MCF 10A (cell line): ENCODE measurements at regions of chr15 and their contacts with region 1.

Region 1: DNA sequence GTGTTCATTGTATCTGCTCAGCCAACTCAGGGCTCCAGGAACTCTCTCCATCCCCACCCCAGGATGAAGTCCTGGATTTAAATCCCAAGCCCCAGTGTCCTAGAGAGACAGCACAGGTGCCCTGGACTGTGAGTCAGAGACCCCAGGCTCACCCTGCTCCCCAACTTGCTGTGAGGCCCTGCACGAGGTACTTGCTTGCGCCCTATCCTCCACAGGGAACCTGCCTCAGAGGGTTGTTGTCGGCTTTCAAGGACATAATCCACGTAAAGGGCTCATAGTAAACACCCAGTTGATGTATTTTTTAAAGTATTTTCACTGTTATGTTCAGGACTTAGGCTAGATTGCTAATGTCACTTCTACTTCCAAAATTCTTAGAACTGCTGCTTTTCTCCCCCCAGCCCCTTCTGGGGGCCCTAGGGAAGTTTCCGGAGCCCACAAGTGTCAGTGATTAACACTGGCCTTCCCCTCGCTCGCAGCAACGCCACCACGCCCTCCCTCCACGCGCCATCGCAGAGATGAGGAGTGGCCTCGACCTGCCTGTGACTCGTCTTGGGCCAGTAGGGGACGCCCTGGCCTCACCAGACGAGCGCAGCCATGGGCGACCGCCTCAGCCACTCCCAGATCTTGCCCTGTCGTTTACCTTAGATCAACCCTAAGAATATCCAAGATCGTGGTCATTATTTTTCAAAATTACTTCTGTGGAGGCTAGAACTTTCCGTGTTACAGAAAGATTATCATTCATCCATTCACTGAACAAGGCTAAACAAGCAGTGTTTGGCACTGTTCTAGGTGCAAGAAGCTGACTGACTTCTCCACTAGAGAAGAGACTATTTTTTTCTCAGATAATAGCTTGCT is 6.0 kb upstream of the SRP14 start:
- DNase-seq: peak; percentile 83
- H3K4me3 Mint-ChIP-seq: peak overlapping the region; percentile 41
- H3K27ac Mint-ChIP-seq: no peak overlapping the region
- H3K4me1 Mint-ChIP-seq: peaks cover 26% of the 10 kb centered on the region
- H3K27me3 Mint-ChIP-seq: no peaks in the 10 kb centered on the region
- CTCF ChIP-seq: peak; percentile 95

Region 2: GRCh38 chr15:39946862-39947261 is 98.1 kb before region 1 on chr15:
- CTCF ChIA-PET with region 1: no interaction called
- POLR2A ChIA-PET with region 1: no interaction called
- intact Hi-C with region 1: no loop called
- DNase-seq: peak; percentile 16
- H3K4me3 Mint-ChIP-seq: no peak overlapping the region
- H3K27ac Mint-ChIP-seq: no peak overlapping the region
- H3K4me1 Mint-ChIP-seq: no peaks in the 10 kb centered on the region
- H3K27me3 Mint-ChIP-seq: no peaks in the 10 kb centered on the region
- CTCF ChIP-seq: no peak

Region 3: GRCh38 chr15:40063563-40064011 is 18.6 kb after region 1 on chr15:
- CTCF ChIA-PET with region 1: interaction called, 15 read pairs
- POLR2A ChIA-PET with region 1: interaction called, 3 read pairs
- intact Hi-C with region 1: no loop called
- DNase-seq: peak; percentile 91
- H3K4me3 Mint-ChIP-seq: no peak overlapping the region
- H3K27ac Mint-ChIP-seq: no peak overlapping the region
- H3K4me1 Mint-ChIP-seq: peaks cover 3% of the 10 kb centered on the region
- H3K27me3 Mint-ChIP-seq: no peaks in the 10 kb centered on the region
- CTCF ChIP-seq: no peak

Region 4: DNA sequence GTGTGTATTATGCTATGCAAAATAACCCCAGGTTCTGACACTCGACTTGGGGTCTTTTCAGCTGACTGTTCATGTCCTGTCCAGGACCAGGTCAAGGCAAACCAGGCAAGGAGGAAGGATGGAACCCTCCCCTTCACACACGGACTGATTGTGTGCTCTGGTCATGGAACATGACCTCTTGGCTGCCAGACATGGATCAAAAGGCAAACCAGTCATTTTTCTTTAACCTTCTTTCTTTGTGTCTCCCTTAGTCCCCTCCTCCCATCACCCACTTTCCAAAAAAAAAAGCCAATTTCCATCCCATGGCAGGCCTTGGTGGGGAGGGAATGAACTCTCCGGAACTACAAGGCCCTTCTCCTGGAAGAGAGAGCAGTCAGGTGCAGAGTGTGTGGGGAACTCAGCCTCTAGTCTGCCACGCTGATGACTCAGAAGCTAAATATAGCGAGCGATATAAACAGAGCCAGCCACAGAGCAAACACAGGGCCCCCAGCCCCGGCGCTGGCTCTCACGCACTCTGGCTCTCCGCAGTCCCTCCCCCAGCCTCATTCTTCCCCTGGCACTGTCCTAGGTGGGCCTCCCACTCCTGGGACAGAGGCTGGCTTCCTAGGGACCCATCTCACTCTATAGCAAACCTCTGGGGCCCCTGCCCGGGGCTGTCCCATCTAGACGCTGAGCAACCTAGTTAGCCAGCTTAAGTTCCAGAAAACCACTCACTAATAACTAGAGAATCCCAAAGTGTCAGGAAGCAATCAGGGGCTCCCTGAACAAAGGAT is 53.7 kb after region 1 on chr15:
- CTCF ChIA-PET with region 1: interaction called, 125 read pairs
- POLR2A ChIA-PET with region 1: interaction called, 8 read pairs
- intact Hi-C with region 1: loop called (anchors 1 kb)
- DNase-seq: peak; percentile 86
- H3K4me3 Mint-ChIP-seq: no peak overlapping the region
- H3K27ac Mint-ChIP-seq: peak overlapping the region; percentile 73
- H3K4me1 Mint-ChIP-seq: peaks cover 24% of the 10 kb centered on the region
- H3K27me3 Mint-ChIP-seq: no peaks in the 10 kb centered on the region
- CTCF ChIP-seq: no peak

Region 5: DNA sequence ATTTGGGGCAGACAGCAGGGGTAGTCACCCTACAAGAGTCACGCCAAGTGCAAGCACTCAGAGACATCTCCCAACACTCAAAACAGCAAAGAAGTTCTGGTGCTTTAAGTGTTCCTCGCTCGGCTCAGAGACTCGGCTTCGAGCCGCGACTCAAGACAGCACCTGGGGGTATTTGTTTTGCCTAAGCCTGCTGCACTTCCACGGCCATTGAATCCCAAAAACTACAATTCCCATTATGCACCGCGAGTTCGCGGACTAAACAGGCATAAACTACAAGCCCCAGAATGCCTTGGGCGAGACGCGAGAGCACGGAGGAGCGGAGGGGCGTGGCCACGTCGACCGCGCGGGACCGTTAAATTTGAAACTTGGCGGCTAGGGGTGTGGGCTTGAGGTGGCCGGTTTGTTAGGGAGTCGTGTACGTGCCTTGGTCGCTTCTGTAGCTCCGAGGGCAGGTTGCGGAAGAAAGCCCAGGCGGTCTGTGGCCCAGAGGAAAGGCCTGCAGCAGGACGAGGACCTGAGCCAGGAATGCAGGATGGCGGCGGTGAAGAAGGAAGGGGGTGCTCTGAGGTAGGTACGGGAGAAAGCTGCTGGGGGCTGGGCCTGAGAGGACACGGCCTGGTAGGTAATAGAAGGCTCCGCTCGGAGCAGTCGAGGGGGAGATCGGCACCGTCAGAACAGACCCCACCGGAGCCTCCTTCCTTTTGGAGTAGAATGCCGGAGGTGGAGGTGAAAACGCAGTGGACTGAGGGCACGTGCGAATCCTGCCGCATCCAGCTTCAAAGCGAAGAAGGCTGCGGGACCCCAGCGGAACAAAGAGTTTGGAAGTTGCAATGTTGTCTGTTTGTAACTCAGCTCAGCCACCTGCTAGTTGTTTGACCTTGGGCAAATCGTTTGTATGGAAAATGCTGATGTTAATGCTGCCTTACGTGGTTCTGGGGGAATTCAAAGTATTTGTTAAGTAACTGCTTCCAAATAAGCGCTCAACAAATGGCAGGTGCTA is 116.0 kb after region 1 on chr15 and contains the start of gene BUB1B:
- CTCF ChIA-PET with region 1: interaction called, 11 read pairs
- POLR2A ChIA-PET with region 1: interaction called, 3 read pairs
- intact Hi-C with region 1: loop called (anchors 1 kb)
- DNase-seq: peak; percentile 96
- H3K4me3 Mint-ChIP-seq: no peak within 1 kb of the TSS
- H3K27ac Mint-ChIP-seq: no peak within 1 kb of the TSS
- H3K4me1 Mint-ChIP-seq: no peaks in the 10 kb centered on the region
- H3K27me3 Mint-ChIP-seq: no peaks in the 10 kb centered on the region
- CTCF ChIP-seq: no peak
- total RNA-seq, gene BUB1B: 24.4 and 30.9 TPM in 2 replicates

Region 6: GRCh38 chr15:40190591-40190990 is 145.6 kb after region 1 on chr15:
- CTCF ChIA-PET with region 1: no interaction called
- POLR2A ChIA-PET with region 1: interaction called, 5 read pairs
- intact Hi-C with region 1: loop called (anchors 5 kb)
- DNase-seq: peak; percentile 48
- H3K4me3 Mint-ChIP-seq: no peak overlapping the region
- H3K27ac Mint-ChIP-seq: no peak overlapping the region
- H3K4me1 Mint-ChIP-seq: peaks cover 6% of the 10 kb centered on the region
- H3K27me3 Mint-ChIP-seq: no peaks in the 10 kb centered on the region
- CTCF ChIP-seq: no peak

Region 7: GRCh38 chr15:40266828-40267304 is 221.9 kb after region 1 on chr15:
- CTCF ChIA-PET with region 1: interaction called, 13 read pairs
- POLR2A ChIA-PET with region 1: interaction called, 4 read pairs
- intact Hi-C with region 1: loop called (anchors 2 kb)
- DNase-seq: peak; percentile 96
- H3K4me3 Mint-ChIP-seq: no peak overlapping the region
- H3K27ac Mint-ChIP-seq: peak overlapping the region; percentile 20
- H3K4me1 Mint-ChIP-seq: peaks cover 7% of the 10 kb centered on the region
- H3K27me3 Mint-ChIP-seq: no peaks in the 10 kb centered on the region
- CTCF ChIP-seq: no peak